GM12878 (cell line): ENCODE measurements at regions of chr22 and their contacts with region 1.

Region 1: DNA sequence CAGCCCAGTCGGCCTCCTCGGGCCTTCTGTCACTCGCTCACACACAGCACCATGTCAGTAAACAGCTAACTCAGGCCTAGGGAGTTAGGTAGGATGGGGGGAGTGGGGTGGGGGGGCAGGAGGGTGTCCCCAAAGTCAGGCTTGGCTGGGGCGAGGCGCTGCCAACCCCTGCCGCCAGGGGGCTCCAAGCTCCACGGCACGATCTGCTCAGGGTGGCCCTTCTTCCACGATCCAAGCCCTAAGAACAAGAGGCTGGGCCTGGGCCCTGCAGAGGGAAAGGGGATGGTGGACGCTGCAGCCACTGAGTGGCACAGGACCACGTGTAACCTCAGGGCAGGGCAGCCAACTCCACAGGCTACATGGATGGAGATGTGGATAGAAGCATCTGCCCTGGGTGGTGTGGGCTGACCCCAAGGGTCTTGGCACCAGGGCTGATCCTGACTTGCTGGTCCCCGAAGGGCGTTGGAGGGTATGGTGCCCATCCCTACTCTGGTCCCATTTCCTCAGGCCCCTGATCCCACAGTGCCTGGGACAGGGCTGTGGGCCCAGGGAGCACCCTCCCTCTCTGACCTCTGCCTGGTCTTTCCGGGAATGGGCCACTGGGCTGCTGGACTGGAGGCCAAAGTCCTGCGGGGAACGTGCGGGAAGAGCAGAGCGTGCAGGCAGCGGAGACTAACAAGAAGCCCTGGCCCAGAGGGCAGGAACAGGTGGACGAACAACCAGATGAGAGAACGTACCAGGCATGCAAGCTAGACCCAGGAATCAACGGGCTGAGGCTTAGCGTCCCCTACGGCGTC is 29.1 kb upstream of the TXNRD2 start:
- DNase-seq: no peak
- ATAC-seq: peak; percentile 88
- H3K4me3 ChIP-seq: no peak overlapping the region
- H3K27ac ChIP-seq: no peak overlapping the region
- H3K4me1 ChIP-seq: no peaks in the 10 kb centered on the region
- H3K27me3 ChIP-seq: no peaks in the 10 kb centered on the region
- CTCF ChIP-seq: peak; percentile 88 to 99 (median 89)
- EP300 ChIP-seq: no peak
- POLR2A ChIP-seq: peak; percentile 45
- RAD21 ChIP-seq: peak; percentile 82

Region 2: DNA sequence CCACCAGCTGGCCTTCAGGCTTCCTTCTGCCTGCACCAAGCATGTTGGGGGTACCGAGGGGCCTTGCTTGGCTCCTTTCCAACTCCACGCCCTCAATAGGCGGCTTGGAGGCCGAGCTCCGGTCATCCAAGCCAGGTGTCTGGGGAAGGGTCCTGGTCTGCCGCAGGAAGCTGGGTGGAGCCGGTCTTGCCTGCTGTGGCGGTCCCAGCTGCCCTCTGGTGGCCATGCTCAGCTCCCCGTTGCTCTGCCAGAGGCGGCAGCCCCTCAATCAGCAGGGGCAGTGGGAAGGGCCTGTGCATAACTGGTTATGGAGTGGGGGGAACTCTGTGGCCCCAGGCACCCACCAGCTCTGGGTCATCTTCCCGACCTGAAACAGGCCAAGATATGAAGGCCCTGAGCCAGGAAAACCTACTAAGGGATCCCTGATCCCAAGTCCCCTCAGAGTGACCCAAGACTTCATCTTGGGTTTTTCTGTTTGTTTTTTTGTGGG is 42.8 kb after region 1 on chr22:
- CTCF ChIA-PET with region 1: interaction called, 5 read pairs
- POLR2A ChIA-PET with region 1: no interaction called
- RAD21 ChIA-PET with region 1: interaction called, 3 read pairs
- SMC1A ChIA-PET with region 1: interaction called, 3 read pairs
- in situ Hi-C with region 1: no loop called
- intact Hi-C with region 1: loop called (anchors 5 kb)
- DNase-seq: no peak
- ATAC-seq: peak; percentile 51
- H3K4me3 ChIP-seq: no peak overlapping the region
- H3K27ac ChIP-seq: no peak overlapping the region
- H3K4me1 ChIP-seq: no peaks in the 10 kb centered on the region
- H3K27me3 ChIP-seq: peaks cover 8 to 12% of the 10 kb centered on the region in 2 experiments; a peak in 3 of 4 replicates
- CTCF ChIP-seq: peak; percentile 52 to 66 (median 57)
- EP300 ChIP-seq: no peak
- POLR2A ChIP-seq: no peak
- RAD21 ChIP-seq: peak; percentile 49

Region 3: DNA sequence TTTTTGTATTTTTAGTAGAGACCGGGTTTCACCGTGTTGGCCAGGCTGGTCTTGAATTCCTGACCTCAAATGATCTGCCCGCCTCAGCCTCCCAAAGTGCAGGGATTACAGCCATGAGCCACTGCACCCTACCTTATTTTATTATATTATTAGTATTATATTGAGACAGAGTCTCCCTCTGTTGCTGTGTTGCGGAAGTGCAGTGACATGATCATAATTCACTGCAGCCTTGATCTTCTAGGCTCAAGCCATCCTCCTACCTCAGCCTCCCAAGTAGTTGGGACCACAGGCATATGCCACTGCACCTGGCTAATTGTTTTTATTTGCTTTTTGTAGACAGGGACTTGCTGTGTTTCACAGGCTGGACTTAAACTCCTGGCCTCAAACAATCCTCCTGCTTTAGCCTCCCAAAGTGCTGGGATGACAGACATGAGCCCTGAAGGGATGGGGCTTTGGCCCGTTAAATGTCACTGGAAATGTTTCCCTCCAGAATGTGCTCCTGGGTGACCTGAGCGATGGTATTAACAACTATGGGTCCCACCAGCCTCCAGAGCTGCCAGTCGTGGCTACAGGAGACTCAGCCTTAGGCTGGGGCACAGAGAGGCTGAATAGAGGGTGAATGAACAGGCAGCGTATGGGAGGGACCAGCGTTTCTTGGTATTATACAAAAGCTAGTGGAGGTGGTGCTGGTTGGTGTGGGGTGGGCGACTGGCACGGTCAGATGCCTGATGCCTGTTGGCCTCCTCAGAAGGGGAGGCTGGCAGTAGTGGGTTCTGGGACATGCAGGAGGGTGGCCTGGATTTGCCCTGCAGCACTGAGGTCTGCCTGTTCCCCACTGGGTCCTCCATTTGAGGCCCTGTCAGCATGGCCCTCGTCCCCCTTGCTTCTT is 57.5 kb after region 1 on chr22:
- CTCF ChIA-PET with region 1: no interaction called
- POLR2A ChIA-PET with region 1: no interaction called
- RAD21 ChIA-PET with region 1: no interaction called
- SMC1A ChIA-PET with region 1: no interaction called
- in situ Hi-C with region 1: no loop called
- intact Hi-C with region 1: loop called (anchors 1 kb)
- DNase-seq: no peak
- ATAC-seq: peak; percentile 73
- H3K4me3 ChIP-seq: no peak overlapping the region
- H3K27ac ChIP-seq: no peak overlapping the region
- H3K4me1 ChIP-seq: peaks cover 3% of the 10 kb centered on the region
- H3K27me3 ChIP-seq: no peaks in the 10 kb centered on the region
- CTCF ChIP-seq: peak; percentile 20 to 43 (median 28); a peak in 4 of 6 replicates
- EP300 ChIP-seq: no peak
- POLR2A ChIP-seq: no peak
- RAD21 ChIP-seq: peak; percentile 24; the same call in 1 of the 2 replicates

Region 4: GRCh38 chr22:20116951-20117645 is 146.4 kb after region 1 on chr22 and contains the start of gene TRMT2A:
- CTCF ChIA-PET with region 1: no interaction called
- POLR2A ChIA-PET with region 1: no interaction called
- RAD21 ChIA-PET with region 1: no interaction called
- SMC1A ChIA-PET with region 1: no interaction called
- in situ Hi-C with region 1: no loop called
- intact Hi-C with region 1: loop called (anchors 5 kb)
- DNase-seq: peak; percentile 86
- ATAC-seq: peak; percentile 84
- H3K4me3 ChIP-seq: peak within 1 kb of the TSS; percentile 83
- H3K27ac ChIP-seq: peak within 1 kb of the TSS; percentile 91
- H3K4me1 ChIP-seq: peaks cover 28% of the 10 kb centered on the region
- H3K27me3 ChIP-seq: no peaks in the 10 kb centered on the region
- CTCF ChIP-seq: peak in 2 of 3 experiments; percentile 10 to 30; a peak in 2 of 6 replicates
- EP300 ChIP-seq: peak in 1 of 2 experiments; percentile 55; a peak in 2 of 4 replicates
- POLR2A ChIP-seq: peak; percentile 71
- RAD21 ChIP-seq: no peak
- polyA plus RNA-seq, gene TRMT2A: 0.29 to 4.8 TPM